ENCODE measurements at regions of chr15 and their contacts with region 1.

Region 1: GRCh38 chr15:40893733-40894688 is at the start of gene VPS18:
- DNase-seq: peak; percentile 98 to 99 (median 99)
- H3K4me3 ChIP-seq: peak within 1 kb of the TSS; percentile 35 to 69 (median 50)
- H3K27ac ChIP-seq: peak within 1 kb of the TSS; percentile 81 to 96 (median 88)
- H3K4me1 ChIP-seq: peaks cover 0 to 18% of the 10 kb centered on the region in 2 donors
- H3K27me3 ChIP-seq: no peaks in the 10 kb centered on the region
- CTCF ChIP-seq: peak; percentile 93 to 99 (median 97)
- POLR2A ChIP-seq: peak; percentile 54 to 87
- total RNA-seq, gene VPS18: 18.0 to 43.4 (median 35.0) TPM

Region 2: DNA sequence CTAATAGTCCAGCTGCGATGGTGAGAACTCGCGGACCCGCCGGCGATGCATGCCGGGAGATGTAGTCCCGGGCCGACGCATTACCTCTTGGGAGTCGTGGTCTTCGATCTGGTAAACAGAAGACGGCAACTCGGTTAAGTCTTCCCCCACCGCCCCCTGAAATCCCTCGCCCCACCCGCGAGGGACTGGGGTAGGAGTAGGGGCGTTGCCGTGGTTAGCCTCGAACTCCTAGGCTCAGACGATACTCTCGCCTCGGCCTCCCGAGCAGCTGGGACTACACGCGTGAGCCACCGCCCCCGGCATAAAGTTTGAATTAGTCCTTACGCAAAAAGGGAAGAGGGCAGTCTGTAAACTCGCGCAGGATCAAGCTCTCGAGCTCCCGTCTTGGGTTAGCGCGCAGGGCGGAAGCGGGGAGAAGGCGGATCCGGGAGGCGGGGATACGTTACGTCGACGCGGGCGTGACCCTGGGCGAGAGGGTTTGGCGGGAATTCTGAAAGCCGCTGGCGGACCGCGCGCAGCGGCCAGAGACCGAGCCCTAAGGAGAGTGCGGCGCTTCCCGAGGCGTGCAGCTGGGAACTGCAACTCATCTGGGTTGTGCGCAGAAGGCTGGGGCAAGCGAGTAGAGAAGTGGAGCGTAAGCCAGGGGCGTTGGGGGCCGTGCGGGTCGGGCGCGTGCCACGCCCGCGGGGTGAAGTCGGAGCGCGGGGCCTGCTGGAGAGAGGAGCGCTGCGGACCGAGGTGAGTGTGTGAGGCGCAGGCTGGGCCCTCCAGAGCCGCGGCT is 199.1 kb before region 1 on chr15 and contains the start of gene RAD51:
- intact Hi-C with region 1: loop called in 1 of 2 experiments (anchors 10 kb)
- DNase-seq: peak; percentile 92 to 95 (median 94)
- H3K4me3 ChIP-seq: peak within 1 kb of the TSS in 3 of 4 donors; percentile 41 to 83 (median 73)
- H3K27ac ChIP-seq: peak within 1 kb of the TSS; percentile 93 to 98 (median 98)
- H3K4me1 ChIP-seq: peaks cover 14 to 16% of the 10 kb centered on the region in 2 donors
- H3K27me3 ChIP-seq: no peaks in the 10 kb centered on the region
- CTCF ChIP-seq: no peak
- POLR2A ChIP-seq: peak; percentile 16 to 62
- total RNA-seq, gene RAD51: 0.47 to 5.2 (median 1.1) TPM in 7 of 9 donors, not detected in the others

Region 3: DNA sequence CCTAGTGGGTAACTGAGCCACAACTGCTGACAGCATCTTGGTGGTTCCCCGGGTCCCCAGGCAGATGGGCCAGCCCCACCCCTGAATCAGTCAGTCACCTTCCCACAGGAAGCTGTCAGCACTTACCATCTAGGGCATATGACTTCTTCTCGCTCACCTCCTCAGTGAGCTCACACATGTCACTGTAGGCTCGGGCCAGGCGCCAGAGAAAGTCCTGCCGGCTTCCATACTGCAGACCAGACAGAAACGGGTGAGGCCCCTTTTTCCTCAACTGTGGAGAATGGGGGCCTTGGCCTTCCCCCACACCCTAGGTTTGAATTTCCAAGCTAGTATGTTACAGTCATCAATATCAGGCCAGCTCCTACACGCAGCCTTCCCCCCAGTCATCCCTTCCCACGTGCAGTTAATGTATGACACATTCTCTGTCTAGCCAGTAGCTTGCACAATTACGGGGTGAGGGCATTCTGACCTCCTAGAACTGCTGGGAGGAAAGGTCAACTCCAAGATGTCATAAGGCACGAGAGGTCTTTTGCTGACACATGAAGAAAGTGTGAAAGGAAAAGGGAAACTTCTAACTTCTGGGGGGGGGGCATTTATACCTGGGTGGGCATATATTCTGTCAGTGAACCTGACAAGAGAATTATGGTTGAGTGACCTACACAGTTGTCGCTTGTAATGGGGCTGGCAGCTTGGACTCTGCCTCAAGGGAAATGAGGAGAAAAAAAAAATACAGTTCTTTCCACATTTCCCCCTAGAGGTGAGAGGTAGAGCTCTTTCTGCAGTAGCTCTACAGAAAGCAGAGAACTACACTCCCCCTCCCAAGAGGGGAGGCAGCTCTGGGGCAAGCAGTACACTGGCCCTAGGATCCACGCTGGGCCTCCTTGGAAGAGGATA is 149.8 kb before region 1 on chr15:
- intact Hi-C with region 1: no loop called
- DNase-seq: peak in 2 of 7 donors; percentile 14 to 47
- H3K4me3 ChIP-seq: no peak overlapping the region
- H3K27ac ChIP-seq: no peak overlapping the region
- H3K4me1 ChIP-seq: no peaks in the 10 kb centered on the region
- H3K27me3 ChIP-seq: no peaks in the 10 kb centered on the region
- CTCF ChIP-seq: no peak
- POLR2A ChIP-seq: no peak

Region 4: GRCh38 chr15:40782580-40783227 is 111.3 kb before region 1 on chr15:
- intact Hi-C with region 1: loop called in 1 of 2 experiments (anchors 10 kb)
- DNase-seq: peak in 6 of 7 donors; percentile 39 to 81 (median 58)
- H3K4me3 ChIP-seq: no peak overlapping the region
- H3K27ac ChIP-seq: no peak overlapping the region
- H3K4me1 ChIP-seq: peaks cover 0 to 4% of the 10 kb centered on the region in 2 donors
- H3K27me3 ChIP-seq: no peaks in the 10 kb centered on the region
- CTCF ChIP-seq: peak in 4 of 6 experiments; percentile 39 to 62 (median 50)
- POLR2A ChIP-seq: no peak

Region 5: GRCh38 chr15:40857601-40858341 is 36.2 kb before region 1 on chr15:
- intact Hi-C with region 1: loop called (anchors 2 to 5 kb)
- DNase-seq: peak; percentile 63 to 87 (median 75)
- H3K4me3 ChIP-seq: no peak overlapping the region
- H3K27ac ChIP-seq: no peak overlapping the region
- H3K4me1 ChIP-seq: peaks cover 0 to 5% of the 10 kb centered on the region in 2 donors
- H3K27me3 ChIP-seq: no peaks in the 10 kb centered on the region
- CTCF ChIP-seq: peak; percentile 87 to 95 (median 92)
- POLR2A ChIP-seq: no peak